ENCODE measurements at regions of chr11 and their contacts with region 1.

Region 1: GRCh38 chr11:123083623-123084029 is 21.7 kb upstream of the HSPA8 start:
- DNase-seq: peak; percentile 54
- ATAC-seq: peak; percentile 32
- H3K4me3 Mint-ChIP-seq: no peak overlapping the region
- H3K27ac Mint-ChIP-seq: no peak overlapping the region
- H3K4me1 Mint-ChIP-seq: peaks cover 50% of the 10 kb centered on the region
- H3K27me3 Mint-ChIP-seq: no peaks in the 10 kb centered on the region

Region 2: GRCh38 chr11:123069908-123070821 is 13.5 kb before region 1 on chr11:
- CTCF ChIA-PET with region 1: interaction called, 7 read pairs
- POLR2A ChIA-PET with region 1: interaction called, 17 read pairs
- DNase-seq: no peak
- ATAC-seq: peak; percentile 62
- H3K4me3 Mint-ChIP-seq: peak overlapping the region; percentile 88
- H3K27ac Mint-ChIP-seq: peak overlapping the region; percentile 98
- H3K4me1 Mint-ChIP-seq: peaks cover 63% of the 10 kb centered on the region
- H3K27me3 Mint-ChIP-seq: no peaks in the 10 kb centered on the region

Region 3: DNA sequence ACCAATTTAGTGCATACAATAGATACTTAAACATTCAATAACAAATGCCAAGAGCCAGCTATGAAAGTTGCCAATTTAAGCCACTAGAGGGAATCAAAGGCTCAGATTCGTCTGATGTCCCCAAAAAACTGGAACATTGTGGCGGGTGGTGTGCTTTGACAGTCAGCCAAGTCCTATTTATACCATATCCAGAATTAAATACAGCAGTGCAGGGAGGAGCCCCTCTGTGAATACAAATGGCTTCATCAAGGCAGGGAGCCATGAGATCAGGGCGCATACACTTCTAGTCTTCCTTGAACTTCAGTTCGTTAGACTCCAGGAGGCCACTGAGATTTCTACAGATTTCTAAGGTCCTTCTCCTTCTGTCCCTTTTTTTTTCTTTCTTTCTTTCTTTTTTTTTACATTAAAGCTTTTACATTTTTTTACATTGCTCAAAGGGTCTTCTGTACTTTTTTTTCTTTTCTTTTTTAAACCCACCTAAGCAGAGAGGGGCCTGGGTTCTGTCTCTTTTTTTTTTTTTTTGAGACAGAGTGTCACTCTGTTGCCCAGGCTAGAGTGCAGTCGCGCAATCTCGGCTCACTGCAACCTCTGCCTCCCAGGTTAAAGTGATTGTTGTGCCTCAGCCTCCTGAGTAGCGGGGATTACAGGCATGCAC is 19.8 kb after region 1 on chr11:
- CTCF ChIA-PET with region 1: interaction called, 24 read pairs
- POLR2A ChIA-PET with region 1: interaction called, 3 read pairs
- DNase-seq: peak; percentile 51
- ATAC-seq: peak; percentile 80
- H3K4me3 Mint-ChIP-seq: no peak overlapping the region
- H3K27ac Mint-ChIP-seq: no peak overlapping the region
- H3K4me1 Mint-ChIP-seq: peaks cover 23% of the 10 kb centered on the region
- H3K27me3 Mint-ChIP-seq: peaks cover 6% of the 10 kb centered on the region

Region 4: DNA sequence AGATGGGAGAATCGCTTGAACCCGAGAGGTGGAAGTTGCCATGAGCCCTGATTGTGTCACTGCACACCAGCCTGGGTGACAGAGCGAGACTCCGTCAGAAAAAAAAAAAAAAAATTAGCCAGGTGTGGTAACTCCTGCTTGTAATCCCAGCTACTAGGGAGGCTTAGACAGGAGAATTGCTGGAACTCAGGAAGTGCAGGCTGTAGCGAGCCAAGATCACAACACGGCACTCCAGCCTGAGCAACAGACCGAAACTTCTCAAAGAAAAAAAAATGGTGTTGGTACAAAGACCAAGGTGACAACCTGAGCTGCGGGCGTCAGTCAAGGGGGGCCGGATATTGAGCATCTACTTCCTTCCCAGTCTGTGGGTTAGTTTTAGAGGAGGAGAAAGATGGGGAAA is 26.7 kb after region 1 on chr11:
- CTCF ChIA-PET with region 1: interaction called, 19 read pairs
- POLR2A ChIA-PET with region 1: no interaction called
- DNase-seq: no peak
- ATAC-seq: no peak
- H3K4me3 Mint-ChIP-seq: no peak overlapping the region
- H3K27ac Mint-ChIP-seq: peak overlapping the region; percentile 17
- H3K4me1 Mint-ChIP-seq: peaks cover 4% of the 10 kb centered on the region
- H3K27me3 Mint-ChIP-seq: peaks cover 13% of the 10 kb centered on the region

Region 5: GRCh38 chr11:123145220-123145619 is 61.6 kb after region 1 on chr11:
- CTCF ChIA-PET with region 1: no interaction called
- POLR2A ChIA-PET with region 1: no interaction called
- DNase-seq: no peak
- ATAC-seq: no peak
- H3K4me3 Mint-ChIP-seq: no peak overlapping the region
- H3K27ac Mint-ChIP-seq: no peak overlapping the region
- H3K4me1 Mint-ChIP-seq: no peaks in the 10 kb centered on the region
- H3K27me3 Mint-ChIP-seq: peaks cover 8% of the 10 kb centered on the region

Measured in activated CD8-positive, alpha-beta T cell treated with anti-CD3 and anti-CD28 coated beads, Interleukin-2, amount 10 ng/mL, durations not matched to agents 7 days and 5 days (primary cell).